Spleen (tissue), 13 donors: ENCODE measurements at regions of chr1 and their contacts with region 1.

Region 1: DNA sequence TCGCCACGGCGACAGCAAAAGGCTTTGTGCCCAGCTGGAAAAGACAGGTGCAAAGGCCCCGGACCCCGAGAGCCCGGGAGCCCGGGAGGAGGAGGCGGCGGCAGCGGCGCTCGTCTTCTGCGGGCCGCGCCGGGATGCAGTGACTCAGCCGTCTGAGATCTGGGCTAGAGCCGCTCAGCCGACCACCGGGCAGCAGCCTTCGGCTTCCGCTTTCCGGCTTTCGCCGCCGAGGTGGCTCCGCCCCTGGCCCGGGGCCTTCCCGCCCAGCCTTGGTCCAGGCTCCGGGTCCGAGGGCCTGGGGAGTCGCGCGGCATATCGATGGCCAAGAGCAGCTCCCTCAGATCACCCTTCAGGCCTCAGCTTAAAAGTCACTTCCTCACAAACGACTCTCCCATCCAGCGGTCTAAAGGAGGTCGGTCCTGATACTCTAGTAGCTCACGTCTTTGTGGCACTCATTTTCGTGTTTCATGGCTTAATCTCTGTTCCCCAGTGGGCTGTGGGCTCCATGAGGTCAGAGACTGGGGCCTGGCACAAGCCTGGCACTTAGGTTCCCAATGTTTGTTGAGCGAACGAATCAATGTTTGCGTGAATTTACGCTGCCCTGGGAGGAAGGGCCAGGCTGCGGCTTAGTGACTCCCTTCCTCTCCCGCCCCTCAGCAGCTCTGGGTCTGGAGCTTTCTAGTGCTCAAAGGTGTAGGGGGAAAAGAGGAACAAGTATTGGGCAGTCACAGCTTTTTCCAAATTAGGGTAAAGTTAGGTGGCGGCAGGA is at the start of gene PHTF1:
- DNase-seq: peak; percentile 95
- H3K4me3 ChIP-seq: peak within 1 kb of the TSS; percentile 80 to 99 (median 94)
- H3K27ac ChIP-seq: peak within 1 kb of the TSS; percentile 92 to 99 (median 96)
- H3K4me1 ChIP-seq: peaks cover 10 to 49% (median 20%) of the 10 kb centered on the region in 6 donors
- H3K27me3 ChIP-seq: no peaks in the 10 kb centered on the region
- CTCF ChIP-seq: no peak
- POLR2A ChIP-seq: peak in 1 of 3 donors; percentile 34
- total RNA-seq, gene PHTF1: 18.3 to 47.6 (median 25.9) TPM

Region 2: GRCh38 chr1:113811888-113812660 is 52.6 kb after region 1 on chr1 and contains the start of gene RSBN1:
- intact Hi-C with region 1: loop called (anchors 10 kb)
- DNase-seq: peak; percentile 100
- H3K4me3 ChIP-seq: peak within 1 kb of the TSS; percentile 66 to 95 (median 76)
- H3K27ac ChIP-seq: peak within 1 kb of the TSS; percentile 94 to 98 (median 96)
- H3K4me1 ChIP-seq: peaks cover 21 to 52% (median 43%) of the 10 kb centered on the region in 6 donors
- H3K27me3 ChIP-seq: no peaks in the 10 kb centered on the region
- CTCF ChIP-seq: peak in 7 of 11 experiments; percentile 19 to 71 (median 35)
- POLR2A ChIP-seq: peak in 2 of 3 donors; percentile 71 to 79
- total RNA-seq, gene RSBN1: 24.2 to 34.0 (median 29.1) TPM